Esophagus muscularis mucosa (tissue), 4 donors: ENCODE measurements at regions of chr6 and their contacts with region 1.

Region 1: DNA sequence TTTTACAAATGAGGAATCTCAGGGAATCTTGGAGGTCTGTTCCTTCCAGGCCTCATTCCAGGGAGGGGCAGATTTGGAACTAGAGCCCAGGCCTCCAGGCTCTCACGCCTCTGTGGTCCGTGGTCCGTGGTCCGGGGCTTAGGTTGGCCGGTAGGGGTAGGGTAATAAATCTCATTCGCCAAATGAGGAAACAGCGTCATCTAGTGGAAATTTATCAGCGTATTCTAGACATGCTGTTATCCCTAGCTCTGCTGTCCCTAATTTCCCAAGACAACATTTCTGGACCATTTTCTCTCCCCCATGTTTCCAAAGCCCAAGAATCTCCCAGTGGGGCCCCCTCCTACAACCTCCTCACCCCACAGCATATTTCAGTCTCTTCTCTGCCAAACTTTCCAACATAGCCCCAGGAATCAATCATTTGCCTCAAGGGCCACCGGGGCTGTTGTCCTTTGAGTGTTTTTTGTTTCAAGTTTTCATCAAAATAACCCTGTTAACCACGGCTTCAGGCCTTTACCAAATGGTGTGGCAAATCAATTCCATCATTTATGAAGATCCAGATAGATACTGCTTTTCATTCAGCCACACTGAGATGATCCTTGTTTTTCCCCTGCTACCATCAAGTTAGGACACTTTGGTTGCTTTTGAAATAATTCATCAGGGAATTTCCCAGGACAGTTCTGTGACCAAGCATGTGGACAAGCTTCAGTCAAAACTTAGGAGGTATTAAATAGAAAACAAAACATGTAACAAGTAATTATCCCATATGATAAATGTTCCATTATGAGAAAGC is 126.8 kb downstream of the ALDH8A1 start:
- DNase-seq: no peak
- H3K4me3 ChIP-seq: no peak overlapping the region
- H3K27ac ChIP-seq: no peak overlapping the region
- H3K4me1 ChIP-seq: peaks cover 0 to 23% (median 21%) of the 10 kb centered on the region in 4 donors
- H3K27me3 ChIP-seq: no peaks in the 10 kb centered on the region
- CTCF ChIP-seq: peak; percentile 76 to 83 (median 80)
- EP300 ChIP-seq: no peak
- POLR2A ChIP-seq: no peak

Region 2: DNA sequence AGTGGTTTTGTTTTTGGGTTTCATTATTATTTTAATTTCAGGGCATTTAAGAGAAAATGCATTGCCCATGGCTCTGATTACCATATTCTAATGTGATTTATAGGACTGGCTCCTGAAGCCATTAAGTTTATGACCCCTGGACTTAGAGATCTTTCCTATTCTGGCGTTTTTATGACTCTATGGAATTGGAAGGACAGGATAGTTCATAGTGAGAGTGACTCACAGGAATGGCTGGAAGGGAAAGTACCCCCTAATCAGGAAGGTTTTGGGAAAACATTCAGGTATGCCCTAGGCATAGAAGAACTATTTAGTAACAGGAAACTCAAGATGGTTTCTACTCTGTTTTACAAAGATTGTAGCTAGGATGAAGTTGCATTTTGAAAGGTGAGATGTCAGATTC is 662.1 kb before region 1 on chr6:
- intact Hi-C with region 1: loop called (anchors 5 kb)
- DNase-seq: no peak
- H3K4me3 ChIP-seq: no peak overlapping the region
- H3K27ac ChIP-seq: no peak overlapping the region
- H3K4me1 ChIP-seq: no peaks in the 10 kb centered on the region
- H3K27me3 ChIP-seq: no peaks in the 10 kb centered on the region
- CTCF ChIP-seq: no peak
- EP300 ChIP-seq: no peak
- POLR2A ChIP-seq: no peak

Region 3: DNA sequence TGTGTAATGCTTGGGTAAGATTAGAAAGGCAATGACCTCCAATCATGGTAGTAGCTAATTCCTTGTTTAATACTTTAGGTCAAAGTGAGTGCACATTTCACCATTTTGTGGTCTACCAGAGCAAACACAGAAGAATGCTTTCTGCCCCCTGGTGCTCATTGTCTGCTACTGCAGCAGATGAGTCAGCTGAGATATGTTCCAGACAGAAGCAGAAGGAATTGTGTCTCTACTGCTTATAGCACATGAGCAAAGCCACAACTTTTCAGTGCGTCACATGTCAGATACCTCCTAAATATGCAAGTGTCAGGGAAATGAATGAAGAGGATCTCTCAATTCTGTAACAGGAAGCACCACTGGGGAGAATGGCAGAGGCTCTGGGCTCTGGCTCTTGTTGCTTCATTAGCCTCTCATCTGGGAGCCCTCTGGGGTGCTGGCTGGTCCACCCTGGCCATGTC is 182.1 kb before region 1 on chr6:
- intact Hi-C with region 1: loop called (anchors 5 kb)
- DNase-seq: peak; percentile 94
- H3K4me3 ChIP-seq: no peak overlapping the region
- H3K27ac ChIP-seq: no peak overlapping the region
- H3K4me1 ChIP-seq: peaks cover 0 to 6% (median 3%) of the 10 kb centered on the region in 4 donors
- H3K27me3 ChIP-seq: no peaks in the 10 kb centered on the region
- CTCF ChIP-seq: peak; percentile 91 to 93 (median 92)
- EP300 ChIP-seq: no peak
- POLR2A ChIP-seq: no peak